Caco-2 (cell line): ENCODE measurements at regions of chr12 and their contacts with region 1.

Region 1: DNA sequence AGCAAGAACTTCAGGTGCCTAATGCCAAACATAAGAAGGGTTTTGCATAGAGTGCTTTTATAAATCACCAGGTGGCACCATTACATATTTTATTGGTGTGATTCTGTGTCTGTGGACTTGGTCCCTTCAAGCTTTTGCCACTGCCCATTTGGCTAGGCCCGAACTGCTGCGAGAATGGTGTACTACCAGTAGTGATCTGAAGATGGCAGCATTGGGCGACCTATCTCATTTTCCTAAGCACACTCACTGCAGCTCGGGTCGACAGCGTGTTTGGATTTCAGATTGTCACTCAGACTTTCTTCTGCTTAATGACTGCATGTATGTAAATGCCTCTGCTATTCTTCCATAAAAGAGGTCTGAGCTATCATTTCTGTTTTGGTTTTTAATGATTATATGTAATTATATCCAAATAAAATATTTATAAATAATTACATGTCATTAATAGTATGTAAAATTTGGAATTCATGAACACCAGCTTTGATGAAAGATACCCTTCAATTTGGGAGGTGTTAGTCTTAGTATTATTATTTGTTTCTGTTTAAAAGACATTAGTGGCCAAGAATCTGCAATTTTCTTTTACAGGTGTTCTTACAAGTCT is 78.5 kb downstream of the TPH2 start:
- DNase-seq: peak; percentile 69 to 78
- H3K4me3 ChIP-seq: no peak overlapping the region
- H3K4me3 Mint-ChIP-seq: no peak overlapping the region
- H3K27ac Mint-ChIP-seq: no peak overlapping the region
- H3K4me1 ChIP-seq: no peaks in the 10 kb centered on the region
- H3K4me1 Mint-ChIP-seq: no peaks in the 10 kb centered on the region
- H3K27me3 ChIP-seq: no peaks in the 10 kb centered on the region
- H3K27me3 Mint-ChIP-seq: peaks cover 6% of the 10 kb centered on the region
- CTCF ChIP-seq: peak; percentile 72 to 81

Region 2: DNA sequence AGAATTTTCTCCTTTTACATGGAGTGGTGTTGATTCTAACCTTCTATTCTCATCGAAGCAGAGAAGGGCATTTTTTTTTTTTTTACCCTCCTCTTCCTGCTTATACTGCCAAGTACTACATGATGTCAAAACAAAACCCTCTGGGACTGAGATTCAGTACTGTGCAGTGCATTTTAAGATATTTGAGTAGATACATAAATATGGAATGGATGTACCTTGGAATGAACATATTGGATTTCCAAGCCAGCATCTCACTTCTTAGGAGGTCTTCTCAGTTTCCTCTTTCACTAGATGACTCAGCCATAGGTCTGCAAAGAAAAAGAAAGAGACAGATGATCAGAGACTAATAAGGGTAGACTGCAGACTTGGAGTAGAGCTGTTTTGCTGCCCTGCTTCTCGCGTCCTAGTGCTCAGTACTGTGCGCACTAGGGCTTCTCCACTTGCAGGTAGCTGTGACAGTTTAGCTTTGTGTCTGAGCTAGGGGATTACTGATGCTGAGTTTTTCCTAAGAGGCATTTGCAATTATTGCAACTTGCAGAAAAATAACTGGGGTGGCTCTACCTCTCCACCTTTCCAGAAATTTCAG is 58.1 kb before region 1 on chr12:
- CTCF ChIA-PET with region 1: no interaction called
- POLR2A ChIA-PET with region 1: no interaction called
- intact Hi-C with region 1: no loop called
- DNase-seq: no peak
- H3K4me3 ChIP-seq: no peak overlapping the region
- H3K4me3 Mint-ChIP-seq: no peak overlapping the region
- H3K27ac Mint-ChIP-seq: no peak overlapping the region
- H3K4me1 ChIP-seq: peaks cover 24% of the 10 kb centered on the region
- H3K4me1 Mint-ChIP-seq: peaks cover 19% of the 10 kb centered on the region
- H3K27me3 ChIP-seq: no peaks in the 10 kb centered on the region
- H3K27me3 Mint-ChIP-seq: no peaks in the 10 kb centered on the region
- CTCF ChIP-seq: no peak

Region 3: GRCh38 chr12:72057330-72057914 is 40.3 kb after region 1 on chr12:
- CTCF ChIA-PET with region 1: no interaction called
- POLR2A ChIA-PET with region 1: no interaction called
- intact Hi-C with region 1: loop called (anchors 2 kb)
- DNase-seq: no peak
- H3K4me3 ChIP-seq: no peak overlapping the region
- H3K4me3 Mint-ChIP-seq: no peak overlapping the region
- H3K27ac Mint-ChIP-seq: no peak overlapping the region
- H3K4me1 ChIP-seq: peaks cover 21% of the 10 kb centered on the region
- H3K4me1 Mint-ChIP-seq: peaks cover 27% of the 10 kb centered on the region
- H3K27me3 ChIP-seq: no peaks in the 10 kb centered on the region
- H3K27me3 Mint-ChIP-seq: no peaks in the 10 kb centered on the region
- CTCF ChIP-seq: no peak

Region 4: DNA sequence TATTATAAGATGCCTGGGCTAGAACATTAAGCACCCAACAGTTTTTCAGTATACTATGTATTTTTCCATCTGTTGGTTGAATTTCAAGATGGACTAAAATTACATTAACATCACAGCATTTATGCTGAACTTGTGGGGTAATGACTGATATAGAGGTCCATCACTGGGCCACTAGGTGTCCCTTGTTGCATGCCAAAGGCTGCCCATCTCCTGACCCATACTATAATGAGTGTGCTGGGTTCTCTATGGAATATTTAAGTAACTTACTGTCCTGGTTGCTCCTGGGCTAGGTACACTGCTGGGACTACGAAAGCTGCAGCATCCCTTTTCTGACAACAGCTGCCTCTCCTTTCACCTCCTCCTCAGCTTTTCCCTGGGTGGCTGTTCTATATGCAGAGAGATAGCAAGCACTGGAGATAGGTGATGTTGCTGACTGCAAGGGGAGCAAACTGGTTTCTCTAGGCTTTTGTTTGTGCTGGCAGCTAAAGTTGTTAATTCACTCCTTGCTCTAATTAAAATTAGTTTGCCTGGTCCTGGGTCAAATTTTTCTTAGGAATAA is 116.4 kb after region 1 on chr12:
- CTCF ChIA-PET with region 1: no interaction called
- POLR2A ChIA-PET with region 1: no interaction called
- intact Hi-C with region 1: loop called (anchors 10 kb)
- DNase-seq: no peak
- H3K4me3 ChIP-seq: no peak overlapping the region
- H3K4me3 Mint-ChIP-seq: no peak overlapping the region
- H3K27ac Mint-ChIP-seq: no peak overlapping the region
- H3K4me1 ChIP-seq: no peaks in the 10 kb centered on the region
- H3K4me1 Mint-ChIP-seq: no peaks in the 10 kb centered on the region
- H3K27me3 ChIP-seq: no peaks in the 10 kb centered on the region
- H3K27me3 Mint-ChIP-seq: peaks cover 17% of the 10 kb centered on the region
- CTCF ChIP-seq: no peak

Region 5: GRCh38 chr12:72264548-72265175 is 247.5 kb after region 1 on chr12:
- CTCF ChIA-PET with region 1: interaction called, 6 read pairs
- POLR2A ChIA-PET with region 1: no interaction called
- intact Hi-C with region 1: loop called (anchors 2 kb)
- DNase-seq: peak in 1 of 2 experiments; percentile 20
- H3K4me3 ChIP-seq: no peak overlapping the region
- H3K4me3 Mint-ChIP-seq: no peak overlapping the region
- H3K27ac Mint-ChIP-seq: no peak overlapping the region
- H3K4me1 ChIP-seq: no peaks in the 10 kb centered on the region
- H3K4me1 Mint-ChIP-seq: no peaks in the 10 kb centered on the region
- H3K27me3 ChIP-seq: no peaks in the 10 kb centered on the region
- H3K27me3 Mint-ChIP-seq: no peaks in the 10 kb centered on the region
- CTCF ChIP-seq: peak; percentile 11 to 52

Region 6: DNA sequence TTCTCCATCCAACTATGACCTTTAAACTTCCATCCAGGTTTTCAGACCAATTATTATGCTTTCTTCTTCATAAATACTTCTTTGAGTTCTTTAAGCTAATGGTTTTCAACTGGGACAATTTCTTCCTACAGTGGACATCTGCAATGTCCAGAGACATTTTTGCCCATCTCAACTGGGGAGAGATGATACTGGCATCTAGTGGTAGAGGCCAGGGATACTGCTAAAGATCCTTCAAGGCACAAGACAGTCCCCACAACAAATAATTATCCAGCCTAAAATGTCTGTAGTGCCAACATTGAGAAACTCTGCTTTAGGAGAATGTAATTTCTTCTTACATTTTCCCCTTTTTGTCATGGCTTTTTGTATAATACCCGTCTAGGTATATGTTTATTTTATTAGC is 265.6 kb after region 1 on chr12:
- CTCF ChIA-PET with region 1: no interaction called
- POLR2A ChIA-PET with region 1: no interaction called
- intact Hi-C with region 1: loop called (anchors 1 kb)
- DNase-seq: no peak
- H3K4me3 ChIP-seq: no peak overlapping the region
- H3K4me3 Mint-ChIP-seq: no peak overlapping the region
- H3K27ac Mint-ChIP-seq: no peak overlapping the region
- H3K4me1 ChIP-seq: no peaks in the 10 kb centered on the region
- H3K4me1 Mint-ChIP-seq: no peaks in the 10 kb centered on the region
- H3K27me3 ChIP-seq: no peaks in the 10 kb centered on the region
- H3K27me3 Mint-ChIP-seq: peaks cover 5% of the 10 kb centered on the region
- CTCF ChIP-seq: peak in 1 of 2 experiments; percentile 54

Region 7: DNA sequence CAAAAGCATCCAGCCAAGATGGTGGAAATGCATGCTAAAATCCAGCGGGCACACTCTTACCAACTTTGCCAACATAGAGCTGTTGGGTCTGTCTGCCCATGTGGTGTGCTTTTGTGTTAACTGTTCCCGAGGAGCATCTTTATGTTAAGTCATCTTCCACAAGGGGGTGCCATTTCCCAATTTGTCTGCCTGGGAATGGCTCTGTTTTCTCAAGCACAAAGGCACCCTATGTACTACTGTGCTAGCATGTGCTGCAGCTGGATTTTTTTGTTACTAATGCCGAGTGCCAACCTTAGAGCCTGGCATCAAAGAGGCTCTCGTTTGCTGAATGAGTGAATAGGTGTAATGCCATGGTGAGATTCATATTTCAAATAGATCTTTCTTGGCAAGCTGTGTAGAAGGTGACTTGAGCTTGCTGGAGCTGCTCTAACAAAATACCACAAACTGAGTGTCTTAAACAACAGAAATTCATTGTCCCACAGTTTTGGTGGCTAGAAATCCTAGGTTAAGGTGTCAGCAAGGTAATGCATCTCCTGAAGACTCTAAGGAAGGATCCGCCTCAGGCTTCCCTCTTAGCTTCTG is 329.3 kb after region 1 on chr12:
- CTCF ChIA-PET with region 1: no interaction called
- POLR2A ChIA-PET with region 1: no interaction called
- intact Hi-C with region 1: loop called (anchors 5 kb)
- DNase-seq: peak; percentile 65 to 75
- H3K4me3 ChIP-seq: no peak overlapping the region
- H3K4me3 Mint-ChIP-seq: no peak overlapping the region
- H3K27ac Mint-ChIP-seq: no peak overlapping the region
- H3K4me1 ChIP-seq: no peaks in the 10 kb centered on the region
- H3K4me1 Mint-ChIP-seq: no peaks in the 10 kb centered on the region
- H3K27me3 ChIP-seq: no peaks in the 10 kb centered on the region; the same call in 1 of the 2 replicates
- H3K27me3 Mint-ChIP-seq: peaks cover under 1% of the 10 kb centered on the region
- CTCF ChIP-seq: peak; percentile 55 to 61